Activated CD4-positive, alpha-beta T cell treated with anti-CD3 and anti-CD28 coated beads for 36 hours (primary cell): ENCODE measurements at regions of chr4 and their contacts with region 1.

Region 1: GRCh38 chr4:2468445-2469192 is at the start of gene RNF4:
- DNase-seq: peak; percentile 98
- ATAC-seq: peak; percentile 86
- H3K4me3 Mint-ChIP-seq: peak within 1 kb of the TSS; percentile 99
- H3K27ac Mint-ChIP-seq: peak within 1 kb of the TSS; percentile 93
- H3K4me1 Mint-ChIP-seq: peaks cover 42% of the 10 kb centered on the region
- H3K27me3 Mint-ChIP-seq: no peaks in the 10 kb centered on the region
- total RNA-seq, gene RNF4: 87.5 to 94.1 TPM

Region 2: DNA sequence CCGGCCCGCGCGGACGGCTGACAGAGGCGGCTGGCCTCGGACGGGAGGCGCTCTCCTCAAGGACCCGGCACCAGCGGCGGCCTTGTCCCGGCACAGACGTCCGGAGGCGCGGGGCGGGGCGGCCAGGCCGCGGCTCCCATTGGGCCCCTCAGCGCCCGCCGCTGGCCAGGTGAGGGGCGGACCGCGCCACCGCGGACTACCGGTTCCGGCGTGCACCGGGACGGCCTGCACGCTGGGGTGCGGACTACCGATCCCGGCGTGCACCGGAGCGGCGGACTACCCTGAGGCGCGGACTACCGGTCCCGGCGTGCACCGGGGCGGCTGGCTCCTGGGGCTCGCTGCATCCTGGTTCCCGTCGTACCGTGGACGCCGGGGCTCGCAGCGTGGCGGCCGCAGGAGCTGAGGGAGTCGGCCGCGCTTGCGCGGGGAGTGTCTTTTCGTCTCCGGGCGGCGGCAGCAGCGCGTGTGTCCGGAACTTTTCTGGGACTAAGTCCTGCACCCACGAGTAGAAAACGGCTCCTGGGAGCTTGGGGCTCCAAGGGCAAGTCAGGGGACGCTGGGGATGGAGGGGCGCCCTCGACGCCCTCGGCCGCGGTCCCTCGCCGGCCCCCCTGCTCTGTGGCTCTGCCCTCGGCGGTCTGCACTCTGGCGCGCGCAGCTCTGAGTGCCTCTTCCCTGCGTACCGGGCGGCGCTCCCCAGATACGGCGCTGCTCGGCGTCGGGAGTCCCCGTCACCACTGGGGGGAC is 612.4 kb before region 1 on chr4 and contains the start of gene LETM1:
- CTCF ChIA-PET with region 1: no interaction called
- POLR2A ChIA-PET with region 1: no interaction called
- intact Hi-C with region 1: loop called in 1 of 2 experiments (anchors 5 kb)
- DNase-seq: peak; percentile 97
- ATAC-seq: peak; percentile 99
- H3K4me3 Mint-ChIP-seq: peak within 1 kb of the TSS; percentile 78
- H3K27ac Mint-ChIP-seq: peak within 1 kb of the TSS; percentile 55
- H3K4me1 Mint-ChIP-seq: peaks cover 40% of the 10 kb centered on the region
- H3K27me3 Mint-ChIP-seq: no peaks in the 10 kb centered on the region
- total RNA-seq, gene LETM1: 41.6 to 51.3 TPM

Region 3: GRCh38 chr4:2220016-2220630 is 248.5 kb before region 1 on chr4:
- CTCF ChIA-PET with region 1: interaction called, 10 read pairs
- POLR2A ChIA-PET with region 1: no interaction called
- intact Hi-C with region 1: no loop called
- DNase-seq: peak; percentile 88
- ATAC-seq: peak; percentile 95
- H3K4me3 Mint-ChIP-seq: no peak overlapping the region
- H3K27ac Mint-ChIP-seq: no peak overlapping the region
- H3K4me1 Mint-ChIP-seq: no peaks in the 10 kb centered on the region
- H3K27me3 Mint-ChIP-seq: no peaks in the 10 kb centered on the region

Region 4: GRCh38 chr4:2412885-2413716 is 55.5 kb before region 1 on chr4:
- CTCF ChIA-PET with region 1: interaction called, 6 read pairs
- POLR2A ChIA-PET with region 1: interaction called, 14 read pairs
- intact Hi-C with region 1: loop called (anchors 1 kb)
- DNase-seq: peak; percentile 94
- ATAC-seq: peak; percentile 82
- H3K4me3 Mint-ChIP-seq: peak overlapping the region; percentile 70
- H3K27ac Mint-ChIP-seq: peak overlapping the region; percentile 97
- H3K4me1 Mint-ChIP-seq: peaks cover 69% of the 10 kb centered on the region
- H3K27me3 Mint-ChIP-seq: peaks cover 9% of the 10 kb centered on the region

Region 5: DNA sequence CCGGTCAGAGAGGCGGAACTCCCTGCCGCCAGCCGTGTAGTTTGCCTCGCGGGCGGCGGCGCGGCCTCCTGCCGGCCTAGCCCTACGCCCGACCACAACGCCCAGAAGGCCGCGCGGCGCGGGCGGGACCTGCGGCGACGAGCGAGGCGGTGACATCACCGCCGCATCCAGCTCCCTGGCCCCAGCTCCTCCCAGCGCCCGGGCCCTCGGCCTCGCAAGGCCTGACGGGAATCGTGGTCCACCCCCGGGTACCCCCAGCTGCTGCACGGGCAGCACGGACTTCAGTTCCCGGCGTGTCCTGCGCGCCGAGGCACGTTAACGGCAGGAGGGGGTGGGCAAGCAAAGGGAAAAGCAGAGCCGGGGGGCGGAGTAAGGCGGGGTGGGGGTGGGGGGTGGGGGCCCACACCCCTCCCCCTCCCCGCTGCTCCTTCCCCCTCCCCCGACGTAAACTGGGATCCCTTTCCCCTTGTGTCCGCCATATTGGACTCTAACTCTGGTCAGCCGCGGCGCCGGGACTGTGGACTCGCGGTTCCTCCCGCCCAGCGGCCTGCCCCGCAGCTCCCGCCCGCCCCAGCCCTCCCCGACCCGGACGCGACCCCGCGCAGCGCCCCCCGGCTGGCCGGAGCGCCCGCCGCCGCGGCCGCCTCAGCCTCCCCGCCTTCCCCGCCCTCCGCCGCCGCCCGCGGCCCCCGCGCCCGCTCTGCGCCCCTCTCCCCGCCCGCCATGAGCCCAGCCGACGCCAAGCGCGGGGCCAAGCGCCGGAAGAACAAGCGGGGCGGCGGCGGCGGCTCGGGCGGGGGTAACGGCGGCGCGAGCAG is 67.8 kb after region 1 on chr4 and contains the start of gene FAM193A:
- CTCF ChIA-PET with region 1: interaction called, 3 read pairs
- POLR2A ChIA-PET with region 1: interaction called, 17 read pairs
- intact Hi-C with region 1: loop called (anchors 1 to 2 kb)
- DNase-seq: peak; percentile 100
- ATAC-seq: peak; percentile 97
- H3K4me3 Mint-ChIP-seq: peak within 1 kb of the TSS; percentile 87
- H3K27ac Mint-ChIP-seq: peak within 1 kb of the TSS; percentile 88
- H3K4me1 Mint-ChIP-seq: peaks cover 24% of the 10 kb centered on the region
- H3K27me3 Mint-ChIP-seq: no peaks in the 10 kb centered on the region
- total RNA-seq, gene FAM193A: 22.1 to 30.1 TPM

Region 6: DNA sequence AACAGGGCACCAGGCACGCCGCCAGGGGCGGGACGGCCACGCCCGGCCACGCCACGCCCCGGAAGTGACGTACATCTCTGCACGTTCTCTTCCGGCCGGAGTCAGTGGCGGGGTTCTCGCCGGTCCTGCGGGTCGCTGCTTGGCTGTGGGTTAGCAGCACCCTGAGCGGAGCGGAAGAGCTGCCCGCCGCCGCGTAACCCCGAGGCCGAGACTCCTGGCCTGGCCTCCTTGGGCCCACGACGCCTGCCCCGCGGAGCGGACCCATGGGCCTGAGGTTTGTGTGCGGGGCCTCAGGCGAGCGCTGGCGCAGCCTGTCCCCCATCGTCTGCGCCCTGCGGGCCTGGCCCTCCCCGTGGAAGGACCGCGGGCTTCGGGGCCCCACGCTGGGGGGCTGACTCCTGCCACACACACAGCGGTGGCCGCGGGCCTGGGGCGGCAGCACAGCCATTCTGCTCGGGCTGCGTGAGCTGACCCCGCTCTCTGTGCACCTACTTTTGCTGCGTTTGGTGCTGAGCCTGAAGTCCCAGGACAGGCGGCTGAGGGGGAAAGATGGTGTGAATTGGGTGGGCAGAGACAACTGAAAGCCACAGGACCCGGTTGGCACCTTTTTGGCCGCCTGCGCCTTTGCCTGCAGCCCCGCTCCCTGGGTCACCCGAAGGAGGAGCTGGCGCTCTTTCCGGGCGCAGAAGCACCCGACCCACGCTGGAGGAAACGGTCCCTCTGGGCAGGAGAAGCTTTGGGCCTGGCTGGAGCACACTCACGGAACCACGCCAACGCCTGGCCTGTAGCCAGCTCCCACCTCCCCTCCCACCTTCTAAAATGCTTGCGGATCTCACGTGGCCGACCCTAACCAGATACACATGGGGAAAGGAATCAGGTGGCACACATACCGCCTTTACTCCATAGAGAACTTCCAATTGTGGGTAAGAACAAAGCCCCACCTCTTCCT is 466.5 kb after region 1 on chr4:
- CTCF ChIA-PET with region 1: no interaction called
- POLR2A ChIA-PET with region 1: interaction called, 3 read pairs
- intact Hi-C with region 1: loop called in 1 of 2 experiments (anchors 1 kb)
- DNase-seq: peak; percentile 98
- ATAC-seq: peak; percentile 34
- H3K4me3 Mint-ChIP-seq: peak overlapping the region; percentile 90
- H3K27ac Mint-ChIP-seq: peak overlapping the region; percentile 95
- H3K4me1 Mint-ChIP-seq: peaks cover 53% of the 10 kb centered on the region
- H3K27me3 Mint-ChIP-seq: no peaks in the 10 kb centered on the region

Region 7: GRCh38 chr4:3292571-3293400 is 824.2 kb after region 1 on chr4 and contains the start of gene RGS12:
- CTCF ChIA-PET with region 1: no interaction called
- POLR2A ChIA-PET with region 1: no interaction called
- intact Hi-C with region 1: loop called in 1 of 2 experiments (anchors 2 kb)
- DNase-seq: peak; percentile 93
- ATAC-seq: peak; percentile 95
- H3K4me3 Mint-ChIP-seq: peak within 1 kb of the TSS; percentile 81
- H3K27ac Mint-ChIP-seq: peak within 1 kb of the TSS; percentile 64
- H3K4me1 Mint-ChIP-seq: peaks cover 11% of the 10 kb centered on the region
- H3K27me3 Mint-ChIP-seq: peaks cover 4% of the 10 kb centered on the region
- total RNA-seq, gene RGS12: 8.0 to 9.4 TPM